GM10248 (cell line): ENCODE measurements at regions of chr21 and their contacts with region 1.

Region 1: GRCh38 chr21:42107881-42108553 is 36.9 kb downstream of the UMODL1 start:
- DNase-seq: peak; percentile 91
- CTCF ChIP-seq: peak; percentile 70

Region 2: DNA sequence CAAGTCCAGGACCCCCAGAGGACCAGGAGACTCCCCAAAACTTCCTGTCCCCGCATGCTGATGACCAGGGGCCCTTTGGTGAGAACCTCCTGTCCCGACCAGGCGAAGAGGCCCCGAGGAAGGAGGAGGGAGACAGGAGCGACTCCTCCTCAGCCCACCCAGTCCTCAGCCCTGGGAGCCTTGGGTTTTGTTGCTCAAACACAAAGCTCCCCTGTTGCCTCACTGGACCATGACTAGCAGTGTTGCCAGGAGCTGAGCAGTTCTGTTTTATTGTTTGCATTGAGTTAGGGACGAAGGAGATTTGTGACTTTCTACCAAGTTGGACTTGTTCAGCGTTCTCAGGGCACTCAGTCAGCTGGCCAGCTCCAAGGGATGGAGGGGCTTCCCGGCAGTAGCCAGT is 26.9 kb before region 1 on chr21:
- CTCF ChIA-PET with region 1: interaction called, 11 read pairs
- POLR2A ChIA-PET with region 1: no interaction called
- DNase-seq: no peak
- CTCF ChIP-seq: no peak

Region 3: GRCh38 chr21:42097860-42098454 is 10.1 kb before region 1 on chr21:
- CTCF ChIA-PET with region 1: interaction called, 21 read pairs
- POLR2A ChIA-PET with region 1: no interaction called
- DNase-seq: no peak
- CTCF ChIP-seq: no peak

Region 4: GRCh38 chr21:42187976-42188653 is 80.1 kb after region 1 on chr21:
- CTCF ChIA-PET with region 1: no interaction called
- POLR2A ChIA-PET with region 1: no interaction called
- DNase-seq: peak; percentile 85
- CTCF ChIP-seq: no peak

Region 5: DNA sequence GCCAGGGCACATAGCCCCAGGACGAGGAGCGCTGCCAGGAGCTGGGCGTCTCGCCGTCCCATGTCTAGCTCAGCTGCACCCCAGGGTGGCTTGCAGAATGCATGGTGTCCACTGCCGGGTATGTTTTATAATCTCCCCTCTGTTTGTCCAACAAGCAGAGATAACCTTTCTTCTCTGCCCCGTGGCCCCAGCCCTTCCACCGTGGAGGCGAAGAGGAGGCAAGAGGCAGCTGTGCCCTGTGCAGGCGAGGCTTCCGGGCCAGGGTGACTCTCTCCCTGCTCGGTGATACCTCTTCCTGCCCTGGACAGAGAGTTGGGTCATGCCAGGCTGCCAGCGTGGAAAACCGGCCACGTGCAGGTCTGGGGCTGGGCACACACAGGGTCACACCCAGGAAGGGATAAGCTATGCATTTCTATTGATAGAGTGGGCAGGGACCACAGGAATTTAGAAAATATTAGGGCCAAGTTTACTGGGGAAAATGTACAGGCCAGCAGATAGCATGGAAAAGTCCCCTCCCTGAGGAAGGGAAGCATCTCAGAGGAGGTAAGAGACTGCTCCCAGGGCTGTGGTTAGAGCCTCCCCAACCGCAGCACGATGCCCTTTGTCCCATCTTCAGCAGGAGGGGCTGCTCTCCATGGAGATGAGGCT is 243.0 kb after region 1 on chr21 and contains the start of gene TFF2:
- CTCF ChIA-PET with region 1: no interaction called
- POLR2A ChIA-PET with region 1: no interaction called
- DNase-seq: no peak
- CTCF ChIP-seq: no peak